ENCODE measurements at regions of chr2 and their contacts with region 1.

Region 1: GRCh38 chr2:135773917-135774316 is 32.3 kb downstream of the UBXN4 start:
- DNase-seq: peak; percentile 71
- H3K4me3 ChIP-seq: no peak overlapping the region
- H3K27ac ChIP-seq: peak overlapping the region; percentile 83
- H3K4me1 ChIP-seq: peaks cover 14% of the 10 kb centered on the region
- H3K27me3 ChIP-seq: no peaks in the 10 kb centered on the region
- CTCF ChIP-seq: no peak
- POLR2A ChIP-seq: no peak

Region 2: DNA sequence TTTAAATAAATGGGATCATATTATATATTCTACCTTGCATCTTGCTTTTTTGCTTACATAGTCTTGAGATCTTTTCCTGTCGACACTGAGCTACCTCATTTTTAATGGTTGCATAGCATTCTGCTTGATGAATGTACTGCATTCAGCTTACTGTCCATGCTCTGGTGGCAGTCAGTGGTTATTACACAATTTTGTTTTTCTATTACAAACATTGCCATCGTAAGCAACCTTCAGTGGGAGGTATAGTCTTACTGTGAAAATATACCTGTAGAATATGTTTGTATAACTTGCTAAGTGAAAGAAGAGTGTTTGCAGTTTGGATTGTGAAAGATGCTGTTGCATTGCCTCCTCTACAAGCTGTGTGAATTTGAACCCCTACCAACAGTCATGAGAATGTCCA is 11.1 kb after region 1 on chr2:
- CTCF ChIA-PET with region 1: interaction called, 12 read pairs
- POLR2A ChIA-PET with region 1: no interaction called
- dilution Hi-C with region 1: no loop called
- intact Hi-C with region 1: no loop called
- DNase-seq: no peak
- H3K4me3 ChIP-seq: no peak overlapping the region
- H3K27ac ChIP-seq: no peak overlapping the region
- H3K4me1 ChIP-seq: peaks cover 7% of the 10 kb centered on the region
- H3K27me3 ChIP-seq: no peaks in the 10 kb centered on the region
- CTCF ChIP-seq: no peak
- POLR2A ChIP-seq: no peak

Measured in endothelial cell of umbilical vein (primary cell).